Head of caudate nucleus (tissue), 42 donors: ENCODE measurements at regions of chr5 and their contacts with region 1.

Region 1: DNA sequence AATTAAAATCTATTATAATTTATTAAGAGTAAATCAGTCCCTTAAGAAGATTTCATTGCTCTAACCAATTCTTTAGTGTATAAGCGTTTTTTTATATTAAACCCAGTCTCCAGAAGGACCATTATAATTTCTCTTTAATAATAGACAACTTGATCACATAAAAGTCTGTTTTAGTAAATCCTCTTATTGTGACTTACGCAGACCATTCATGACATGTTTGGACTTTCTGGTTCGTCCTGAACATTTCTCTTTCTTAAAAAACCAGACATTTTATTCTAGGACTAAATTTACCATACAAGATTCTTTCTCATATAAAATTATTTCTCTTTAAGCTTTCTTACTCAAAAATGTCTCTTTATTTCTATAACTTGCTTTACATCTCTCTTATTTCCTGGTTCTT is 196.2 kb upstream of the RAI14 start:
- DNase-seq: no peak

Region 2: GRCh38 chr5:33968211-33969005 is 491.5 kb before region 1 on chr5:
- intact Hi-C with region 1: no loop called
- DNase-seq: no peak

Region 3: GRCh38 chr5:34007621-34008600 is 452.0 kb before region 1 on chr5 and contains the start of gene AMACR:
- intact Hi-C with region 1: loop called (anchors 10 kb)
- DNase-seq: peak; percentile 78 to 96 (median 94)

Region 4: GRCh38 chr5:34803974-34804732 is 344.2 kb after region 1 on chr5:
- intact Hi-C with region 1: no loop called
- DNase-seq: no peak